GM10248 (cell line): ENCODE measurements at regions of chr7 and their contacts with region 1.

Region 1: GRCh38 chr7:129906700-129907099 is 46.1 kb downstream of the UBE2H start:
- DNase-seq: no peak
- CTCF ChIP-seq: no peak

Region 2: GRCh38 chr7:129343099-129343700 is 563.5 kb before region 1 on chr7:
- CTCF ChIA-PET with region 1: no interaction called
- POLR2A ChIA-PET with region 1: no interaction called
- DNase-seq: peak; percentile 44
- CTCF ChIP-seq: peak; percentile 70

Region 3: GRCh38 chr7:129776397-129776792 is 130.3 kb before region 1 on chr7:
- CTCF ChIA-PET with region 1: no interaction called
- POLR2A ChIA-PET with region 1: interaction called, 10 read pairs
- DNase-seq: no peak
- CTCF ChIP-seq: no peak

Region 4: GRCh38 chr7:129875745-129876411 is 30.8 kb before region 1 on chr7:
- CTCF ChIA-PET with region 1: no interaction called
- POLR2A ChIA-PET with region 1: no interaction called
- DNase-seq: no peak
- CTCF ChIP-seq: no peak